CD8-positive, alpha-beta T cell (primary cell): ENCODE measurements at regions of chrX and their contacts with region 1.

Region 1: DNA sequence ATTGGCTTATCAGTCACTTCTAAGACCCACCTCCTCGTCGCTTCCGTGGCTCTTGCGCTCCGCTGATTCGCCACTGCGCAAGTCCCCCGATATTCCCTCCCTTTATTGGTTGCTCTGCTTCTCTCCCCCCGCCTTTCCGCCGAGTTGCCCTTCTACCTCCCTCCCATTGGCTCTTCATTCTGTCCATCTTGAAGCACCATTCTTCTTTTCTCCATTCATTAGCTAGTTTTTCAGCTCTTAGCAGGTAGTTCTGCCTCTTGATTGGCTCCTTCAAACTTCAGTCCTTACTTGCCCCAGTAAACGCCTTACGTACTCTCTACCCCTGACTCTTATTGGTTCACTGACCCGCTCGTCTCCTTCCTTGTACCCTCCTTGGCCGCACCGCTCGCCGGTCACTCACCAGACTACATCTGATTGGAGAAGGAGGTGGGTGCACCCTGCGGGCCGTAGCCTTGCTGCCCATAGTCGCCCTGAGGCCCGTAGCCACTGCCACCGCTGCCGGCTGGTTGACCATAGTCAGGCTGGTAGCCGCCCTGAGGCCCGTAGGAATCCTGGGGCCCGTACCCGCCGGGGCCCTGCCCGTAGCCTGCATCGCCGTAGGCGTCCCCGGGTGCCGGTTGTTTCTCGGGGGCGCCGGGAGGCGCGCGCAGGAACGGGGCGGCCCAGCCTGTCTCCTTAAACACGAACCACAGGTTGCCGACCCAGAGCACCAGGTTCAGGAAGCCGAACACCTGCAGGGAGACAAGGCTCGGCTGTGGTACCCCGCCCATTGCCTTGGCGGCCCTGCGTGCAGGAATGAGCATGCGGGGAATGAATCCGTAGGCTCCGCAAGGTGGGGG is 5.1 kb upstream of the PRICKLE3 start:
- DNase-seq: peak; percentile 62 to 97 (median 78)
- ATAC-seq: peak; percentile 88
- H3K4me3 ChIP-seq: peak overlapping the region; percentile 71 to 77
- H3K4me3 Mint-ChIP-seq: peak overlapping the region; percentile 92
- H3K27ac ChIP-seq: peak overlapping the region; percentile 61 to 72
- H3K27ac Mint-ChIP-seq: peak overlapping the region; percentile 93
- H3K4me1 ChIP-seq: peaks cover 15% of the 10 kb centered on the region
- H3K4me1 Mint-ChIP-seq: peaks cover 26% of the 10 kb centered on the region
- H3K27me3 ChIP-seq: no peaks in the 10 kb centered on the region
- H3K27me3 Mint-ChIP-seq: no peaks in the 10 kb centered on the region
- CTCF ChIP-seq: no peak

Region 2: DNA sequence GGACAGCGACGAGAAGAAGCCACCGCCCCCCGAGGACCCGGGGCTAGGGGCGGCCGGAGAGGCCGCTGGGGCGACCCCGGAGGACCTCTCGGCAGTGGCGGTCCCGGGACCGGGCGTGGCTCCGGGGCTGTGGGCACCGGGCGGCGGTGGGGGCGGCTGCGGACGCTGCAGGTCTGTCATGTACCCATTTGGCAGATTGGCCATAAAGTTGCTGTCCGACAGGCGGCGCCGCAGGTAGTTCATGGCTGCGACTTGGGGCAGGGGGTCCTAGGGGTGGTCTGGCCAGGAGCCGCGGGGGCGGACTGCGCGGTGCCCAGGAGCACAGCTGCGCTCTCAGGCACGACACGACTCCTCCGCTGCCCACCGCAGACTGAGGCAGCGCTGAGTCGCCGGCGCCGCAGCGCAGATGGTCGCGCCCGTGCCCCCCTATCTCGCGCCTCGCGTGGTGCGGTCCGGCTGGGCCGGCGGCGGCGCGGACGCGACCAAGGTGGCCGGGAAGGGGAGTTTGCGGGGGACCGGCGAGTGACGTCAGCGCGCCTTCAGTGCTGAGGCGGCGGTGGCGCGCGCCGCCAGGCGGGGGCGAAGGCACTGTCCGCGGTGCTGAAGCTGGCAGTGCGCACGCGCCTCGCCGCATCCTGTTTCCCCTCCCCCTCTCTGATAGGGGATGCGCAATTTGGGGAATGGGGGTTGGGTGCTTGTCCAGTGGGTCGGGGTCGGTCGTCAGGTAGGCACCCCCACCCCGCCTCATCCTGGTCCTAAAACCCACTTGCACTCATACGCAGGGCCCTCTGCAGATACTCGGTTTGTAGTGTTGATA is 1571.6 kb before region 1 on chrX and contains the start of gene SYN1:
- CTCF ChIA-PET with region 1: no interaction called
- POLR2A ChIA-PET with region 1: no interaction called
- intact Hi-C with region 1: loop called in 1 of 2 experiments (anchors 5 kb)
- DNase-seq: peak; percentile 63 to 93 (median 83)
- ATAC-seq: peak; percentile 89
- H3K4me3 ChIP-seq: peak within 1 kb of the TSS; percentile 39 to 41
- H3K4me3 Mint-ChIP-seq: peak within 1 kb of the TSS; percentile 46
- H3K27ac ChIP-seq: no peak within 1 kb of the TSS
- H3K27ac Mint-ChIP-seq: no peak within 1 kb of the TSS
- H3K4me1 ChIP-seq: peaks cover 10% of the 10 kb centered on the region
- H3K4me1 Mint-ChIP-seq: peaks cover 21% of the 10 kb centered on the region
- H3K27me3 ChIP-seq: no peaks in the 10 kb centered on the region
- H3K27me3 Mint-ChIP-seq: peaks cover 8% of the 10 kb centered on the region
- CTCF ChIP-seq: no peak
- total RNA-seq, gene SYN1: 0.17 TPM in 1 of 2 experiments, not detected in the other

Region 3: DNA sequence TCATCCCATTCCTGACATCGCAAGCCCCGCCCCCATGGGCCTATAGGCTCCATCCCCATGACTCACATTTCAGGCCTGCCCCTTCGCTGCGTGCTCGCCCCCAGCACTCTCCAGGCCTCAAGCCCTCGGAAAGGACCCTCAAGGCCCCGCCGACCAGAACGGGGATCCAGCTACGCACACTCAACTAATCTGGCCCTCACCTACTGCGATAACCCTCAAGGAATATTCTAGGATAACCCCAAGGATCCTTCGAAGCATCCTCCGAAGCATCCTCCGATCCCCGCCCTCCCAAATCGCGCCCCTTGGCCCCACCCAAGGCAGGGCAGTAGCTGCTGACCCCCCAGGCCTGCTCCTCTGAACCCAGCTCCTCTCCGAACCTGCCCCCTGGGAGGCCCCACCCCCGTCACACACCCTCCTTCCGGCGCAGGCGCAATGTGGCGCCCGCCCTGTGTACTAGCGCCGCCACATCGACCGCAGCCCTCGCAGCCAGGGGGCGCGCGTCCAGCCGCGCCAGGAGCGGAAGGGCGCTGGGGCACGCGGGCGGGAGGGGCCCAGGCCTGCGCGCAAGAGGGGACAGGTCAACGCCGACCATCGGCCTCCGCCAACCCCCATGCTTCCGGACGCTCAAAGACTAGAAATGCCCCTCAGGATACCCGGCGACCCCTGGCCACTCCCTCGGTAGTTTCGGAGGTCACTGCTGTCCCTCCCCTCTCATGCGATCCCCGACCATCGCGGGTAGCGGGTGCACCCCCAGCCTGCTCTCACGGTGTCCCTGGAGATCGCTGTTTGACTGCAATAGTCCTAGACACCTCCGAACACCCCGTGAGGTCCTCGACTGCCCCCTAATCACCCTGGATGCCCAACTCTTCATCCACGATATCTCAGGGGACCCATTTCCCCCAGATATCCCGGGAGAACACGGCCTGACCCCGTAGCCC is 35.1 kb before region 1 on chrX:
- CTCF ChIA-PET with region 1: interaction called, 6 read pairs
- POLR2A ChIA-PET with region 1: interaction called, 3 read pairs
- intact Hi-C with region 1: loop called in 1 of 2 experiments (anchors 1 kb)
- DNase-seq: peak; percentile 69 to 91 (median 85)
- ATAC-seq: peak; percentile 94
- H3K4me3 ChIP-seq: peak overlapping the region; percentile 54 to 83
- H3K4me3 Mint-ChIP-seq: peak overlapping the region; percentile 92
- H3K27ac ChIP-seq: peak overlapping the region; percentile 78 to 80
- H3K27ac Mint-ChIP-seq: peak overlapping the region; percentile 95
- H3K4me1 ChIP-seq: peaks cover 7% of the 10 kb centered on the region
- H3K4me1 Mint-ChIP-seq: peaks cover 18% of the 10 kb centered on the region
- H3K27me3 ChIP-seq: no peaks in the 10 kb centered on the region
- H3K27me3 Mint-ChIP-seq: no peaks in the 10 kb centered on the region
- CTCF ChIP-seq: peak; percentile 36

Region 4: DNA sequence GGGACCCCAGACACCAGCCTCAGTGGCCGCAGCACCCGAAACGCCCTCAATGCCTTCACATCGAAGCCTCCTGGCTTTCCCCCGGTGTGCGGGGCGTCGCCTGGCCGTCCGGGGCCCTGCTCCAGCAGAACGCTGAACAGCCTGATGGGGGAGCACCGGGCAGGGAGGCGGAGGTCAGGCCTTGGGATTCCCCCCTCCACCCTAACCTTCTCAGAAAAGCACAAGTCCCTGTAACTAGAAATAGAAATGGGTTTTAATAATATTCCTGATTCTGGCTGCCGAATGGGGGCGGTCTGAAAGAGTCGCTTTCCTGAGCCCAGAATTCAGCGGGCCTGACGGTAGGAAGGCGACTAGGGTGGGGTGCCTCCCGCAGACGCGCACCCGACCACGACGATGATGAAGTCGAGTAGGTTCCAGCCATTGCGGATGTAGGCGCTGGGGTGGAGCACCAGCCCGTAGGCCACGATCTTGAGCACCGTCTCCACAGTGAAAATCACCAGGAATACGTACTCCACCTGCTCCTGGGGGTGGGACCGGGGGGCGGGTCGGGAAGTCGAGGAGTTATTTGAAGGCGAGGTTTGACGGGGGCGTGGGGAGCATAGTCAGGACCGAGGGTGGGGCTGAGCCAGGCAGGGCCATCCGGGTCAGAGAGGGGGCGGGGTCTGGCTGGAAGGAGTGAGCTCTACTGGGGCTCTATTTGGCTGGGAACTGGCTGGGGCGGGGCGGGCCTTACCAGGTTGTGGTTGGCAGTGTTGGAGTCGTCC is 39.4 kb after region 1 on chrX:
- CTCF ChIA-PET with region 1: interaction called, 3 read pairs
- POLR2A ChIA-PET with region 1: no interaction called
- intact Hi-C with region 1: loop called in 1 of 2 experiments (anchors 5 kb)
- DNase-seq: peak; percentile 18 to 76 (median 50)
- ATAC-seq: peak; percentile 70
- H3K4me3 ChIP-seq: peak overlapping the region; percentile 48
- H3K4me3 Mint-ChIP-seq: peak overlapping the region; percentile 81
- H3K27ac ChIP-seq: peak overlapping the region; percentile 66 to 75
- H3K27ac Mint-ChIP-seq: peak overlapping the region; percentile 91
- H3K4me1 ChIP-seq: peaks cover 9% of the 10 kb centered on the region
- H3K4me1 Mint-ChIP-seq: peaks cover 14% of the 10 kb centered on the region
- H3K27me3 ChIP-seq: no peaks in the 10 kb centered on the region
- H3K27me3 Mint-ChIP-seq: no peaks in the 10 kb centered on the region
- CTCF ChIP-seq: no peak

Region 5: DNA sequence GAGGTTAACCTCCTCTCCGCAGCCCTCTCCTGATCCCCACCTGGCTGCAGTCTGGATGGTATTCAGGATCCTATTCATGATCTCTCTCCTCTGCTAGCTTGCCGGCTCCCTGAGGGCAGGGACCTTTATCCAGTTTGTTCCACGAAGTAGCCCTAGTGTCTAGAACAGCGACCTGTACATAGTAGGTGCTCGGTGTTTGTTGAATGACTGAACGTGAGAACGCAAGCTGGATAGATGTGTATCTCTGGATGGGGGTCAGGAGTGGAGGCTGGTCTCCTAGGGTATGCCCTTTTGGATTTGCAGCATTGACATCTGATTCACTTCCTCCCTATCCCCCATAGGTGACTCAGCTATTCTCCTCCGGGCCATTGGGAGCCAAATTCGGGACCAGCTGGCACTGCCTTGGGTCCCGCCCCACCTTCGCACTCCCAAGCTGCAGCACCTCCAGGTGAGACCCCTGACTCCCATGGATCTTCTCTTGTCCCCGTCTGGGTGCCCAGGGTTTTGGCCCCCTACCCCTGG is 51.4 kb after region 1 on chrX:
- CTCF ChIA-PET with region 1: no interaction called
- POLR2A ChIA-PET with region 1: no interaction called
- intact Hi-C with region 1: no loop called
- DNase-seq: no peak
- ATAC-seq: no peak
- H3K4me3 ChIP-seq: no peak overlapping the region
- H3K4me3 Mint-ChIP-seq: no peak overlapping the region
- H3K27ac ChIP-seq: no peak overlapping the region
- H3K27ac Mint-ChIP-seq: no peak overlapping the region
- H3K4me1 ChIP-seq: no peaks in the 10 kb centered on the region
- H3K4me1 Mint-ChIP-seq: peaks cover 10% of the 10 kb centered on the region
- H3K27me3 ChIP-seq: no peaks in the 10 kb centered on the region
- H3K27me3 Mint-ChIP-seq: no peaks in the 10 kb centered on the region
- CTCF ChIP-seq: no peak

Region 6: DNA sequence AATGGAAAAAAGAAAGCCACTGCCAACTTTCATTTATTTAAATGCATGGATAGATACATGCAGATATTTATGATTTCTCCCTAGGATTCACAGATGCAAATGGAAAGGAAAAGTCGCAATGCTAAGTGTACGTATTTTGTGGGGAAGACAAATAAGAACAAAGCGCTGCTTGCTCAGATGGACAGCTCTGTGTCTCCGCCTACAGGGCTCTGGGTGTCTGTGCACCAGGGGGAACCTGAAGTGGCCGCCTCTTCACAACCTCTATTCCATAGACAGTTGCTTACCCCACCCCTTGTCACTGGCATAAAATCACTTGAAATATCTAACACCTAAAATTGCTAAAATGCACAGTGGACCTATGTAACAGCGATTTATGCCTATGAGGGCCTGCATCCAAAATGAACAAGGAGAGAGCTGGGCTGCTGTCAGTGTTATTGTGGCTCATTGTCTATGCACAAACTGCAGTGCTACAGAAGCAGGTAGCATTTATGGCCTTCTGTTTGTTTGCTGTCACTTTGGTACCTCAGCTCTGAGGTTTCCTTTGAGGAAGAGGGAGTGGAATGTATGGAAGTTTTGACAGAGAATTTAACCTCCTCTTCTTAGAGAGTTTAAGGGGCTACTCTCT is 563.1 kb after region 1 on chrX:
- CTCF ChIA-PET with region 1: interaction called, 8 read pairs
- POLR2A ChIA-PET with region 1: interaction called, 3 read pairs
- intact Hi-C with region 1: loop called in 1 of 2 experiments (anchors 1 kb)
- DNase-seq: peak; percentile 4 to 67 (median 45)
- ATAC-seq: peak; percentile 81
- H3K4me3 ChIP-seq: no peak overlapping the region
- H3K4me3 Mint-ChIP-seq: peak overlapping the region; percentile 11
- H3K27ac ChIP-seq: no peak overlapping the region
- H3K27ac Mint-ChIP-seq: no peak overlapping the region
- H3K4me1 ChIP-seq: no peaks in the 10 kb centered on the region
- H3K4me1 Mint-ChIP-seq: peaks cover 2% of the 10 kb centered on the region
- H3K27me3 ChIP-seq: no peaks in the 10 kb centered on the region
- H3K27me3 Mint-ChIP-seq: peaks cover 6% of the 10 kb centered on the region
- CTCF ChIP-seq: peak; percentile 60